ENCODE measurements at regions of chr4 and their contacts with region 1.

Region 1: DNA sequence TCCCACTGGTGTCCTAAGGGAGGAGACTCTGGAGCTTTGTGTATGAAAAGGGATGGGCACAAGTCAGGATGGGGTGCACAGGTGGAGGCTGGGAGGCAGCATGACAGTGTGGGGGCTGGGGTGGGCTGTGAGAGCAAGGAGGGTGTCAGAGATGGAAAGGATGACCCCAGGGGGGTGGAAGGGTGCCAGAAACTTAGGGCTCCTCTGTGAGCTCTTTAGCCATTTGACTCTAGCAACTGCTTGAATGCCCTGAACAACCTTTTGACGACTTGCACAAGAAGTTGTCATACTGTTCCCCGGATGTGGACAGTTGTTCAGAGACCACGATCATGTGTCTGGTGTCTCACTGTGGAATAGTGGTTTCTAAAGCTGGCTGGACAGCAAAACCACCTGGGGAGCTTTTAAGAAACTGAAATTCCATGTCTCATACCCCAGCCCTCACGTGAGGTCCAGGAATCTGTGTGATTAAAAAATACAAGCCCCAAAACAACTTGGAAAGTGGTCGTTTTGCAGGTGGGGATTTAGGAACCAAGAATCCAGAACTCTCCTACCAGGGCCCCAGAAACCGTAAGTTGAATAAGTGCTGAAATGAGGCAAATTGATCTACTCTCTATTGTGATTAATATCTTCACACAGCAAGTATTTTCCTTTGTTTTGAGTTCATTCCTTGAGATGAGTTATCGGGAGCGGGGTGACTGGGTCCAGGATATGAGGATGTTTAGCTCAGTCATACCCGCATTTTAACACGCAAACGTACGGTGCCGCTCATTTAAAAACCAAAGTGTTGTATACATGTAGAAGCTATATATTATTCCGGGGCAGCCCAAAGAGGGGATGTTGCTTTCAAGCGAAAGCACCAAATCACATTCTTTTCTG is 3.4 kb downstream of the RHOH start:
- DNase-seq: no peak
- H3K4me3 ChIP-seq: peak overlapping the region in 5 of 59 donors; percentile 10 to 40 (median 22)
- H3K27ac ChIP-seq: peak overlapping the region in 11 of 59 donors; percentile 6 to 67 (median 30)
- H3K27me3 ChIP-seq: peaks cover 0 to 5% (median 0%) of the 10 kb centered on the region in 45 donors
- CTCF ChIP-seq: no peak

Region 2: GRCh38 chr4:38980903-38981676 is 1219.1 kb before region 1 on chr4:
- intact Hi-C with region 1: no loop called
- DNase-seq: no peak
- H3K4me3 ChIP-seq: no peak overlapping the region
- H3K27ac ChIP-seq: no peak overlapping the region
- H3K27me3 ChIP-seq: no peaks in the 10 kb centered on the region
- CTCF ChIP-seq: no peak

Region 3: DNA sequence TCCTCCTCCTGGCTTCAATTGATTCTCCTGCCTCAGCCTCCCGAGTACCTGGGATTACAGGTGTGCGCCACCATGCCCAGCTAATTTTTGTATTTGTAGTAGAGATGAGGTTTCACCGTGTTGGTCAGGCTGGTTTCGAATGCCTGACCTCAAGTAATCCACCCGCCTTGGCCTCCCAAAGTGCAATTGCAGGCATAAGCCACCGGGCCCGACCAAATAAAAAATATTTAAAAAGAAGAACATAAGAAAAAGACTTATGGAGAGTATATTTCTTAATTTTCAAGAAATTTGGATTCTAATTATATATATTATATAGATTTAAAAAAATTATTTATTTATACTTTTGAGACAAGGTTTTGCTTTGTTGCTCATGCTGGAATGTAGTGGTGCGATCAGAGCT is 113.8 kb before region 1 on chr4:
- intact Hi-C with region 1: no loop called
- DNase-seq: no peak
- H3K4me3 ChIP-seq: no peak overlapping the region
- H3K27ac ChIP-seq: no peak overlapping the region
- H3K27me3 ChIP-seq: no peaks in the 10 kb centered on the region
- CTCF ChIP-seq: no peak

Region 4: DNA sequence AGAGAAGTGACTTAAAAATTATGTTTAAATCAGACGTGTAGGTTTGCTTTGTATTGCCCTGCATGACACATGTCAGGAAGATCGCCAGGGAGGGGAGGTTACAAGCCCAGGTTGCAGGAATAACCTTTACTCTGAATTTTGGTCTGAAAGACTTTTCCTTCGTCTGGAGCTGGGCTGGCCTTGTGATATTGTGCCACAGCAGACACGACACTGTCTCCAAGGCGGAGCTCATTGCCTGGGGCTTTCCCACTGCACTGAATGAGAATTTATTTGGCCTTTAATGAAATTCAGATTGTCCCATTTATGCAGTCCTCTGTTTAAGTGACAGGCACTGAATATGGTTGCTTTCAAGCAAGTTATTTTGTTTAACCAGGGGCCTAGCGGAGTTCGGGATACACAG is 41.7 kb after region 1 on chr4:
- intact Hi-C with region 1: loop called in 1 of 2 experiments (anchors 5 kb)
- DNase-seq: no peak
- H3K4me3 ChIP-seq: no peak overlapping the region
- H3K27ac ChIP-seq: no peak overlapping the region
- H3K27me3 ChIP-seq: no peaks in the 10 kb centered on the region
- CTCF ChIP-seq: no peak

Measured in dorsolateral prefrontal cortex (tissue), 120 donors.